Gastrocnemius medialis (tissue), 4 donors: ENCODE measurements at regions of chr12 and their contacts with region 1.

Region 1: GRCh38 chr12:104958009-104958945 is at the start of gene SLC41A2:
- DNase-seq: peak; percentile 45 to 51
- ATAC-seq: peak; percentile 79 to 81
- H3K4me3 ChIP-seq: peak within 1 kb of the TSS; percentile 67 to 93 (median 72)
- H3K27ac ChIP-seq: peak within 1 kb of the TSS; percentile 31 to 49 (median 48)
- H3K4me1 ChIP-seq: peaks cover 8 to 9% of the 10 kb centered on the region in 2 donors
- H3K27me3 ChIP-seq: peaks cover 5 to 24% (median 15%) of the 10 kb centered on the region in 3 donors
- CTCF ChIP-seq: peak in 3 of 5 experiments; percentile 23 to 45 (median 31)
- POLR2A ChIP-seq: peak; percentile 13 to 40
- total RNA-seq, gene SLC41A2: 0.35 to 4.5 (median 0.83) TPM

Region 2: GRCh38 chr12:104710940-104711689 is 247.2 kb before region 1 on chr12:
- in situ Hi-C with region 1: no loop called
- intact Hi-C with region 1: no loop called
- DNase-seq: no peak
- ATAC-seq: peak; percentile 30 to 58
- H3K4me3 ChIP-seq: no peak overlapping the region
- H3K27ac ChIP-seq: peak overlapping the region in 1 of 4 donors; percentile 10
- H3K4me1 ChIP-seq: no peaks in the 10 kb centered on the region
- H3K27me3 ChIP-seq: no peaks in the 10 kb centered on the region
- CTCF ChIP-seq: no peak
- POLR2A ChIP-seq: no peak

Region 3: DNA sequence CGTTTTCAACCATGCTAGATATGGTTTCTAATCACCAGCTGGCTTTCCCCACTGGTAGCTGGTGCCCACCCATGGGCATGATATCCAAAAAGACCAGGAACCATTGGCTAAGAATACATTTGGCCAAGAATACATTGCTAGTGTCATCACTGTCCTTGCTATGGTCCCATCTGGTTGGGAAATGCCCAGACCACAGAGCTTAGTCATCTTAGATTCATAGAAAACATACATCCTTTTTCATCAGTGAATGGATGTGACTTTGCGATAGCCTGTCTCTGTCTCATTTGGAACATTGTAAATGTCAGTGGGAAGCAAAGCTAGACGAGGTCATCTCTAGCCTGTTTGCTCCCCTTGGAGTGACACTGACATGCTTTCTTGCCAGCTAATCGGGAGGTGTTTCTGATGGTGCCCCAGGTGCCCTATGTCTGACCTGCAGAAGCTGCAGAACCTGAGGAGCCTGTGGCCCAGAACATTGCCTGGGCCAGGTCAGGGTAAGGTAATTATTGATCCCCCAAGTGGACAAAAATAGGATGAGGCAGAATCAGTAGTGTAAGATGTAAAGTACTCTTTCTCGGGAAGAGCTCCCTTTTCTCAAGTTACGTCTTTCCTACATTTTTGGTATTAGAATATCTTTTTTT is 195.0 kb before region 1 on chr12:
- in situ Hi-C with region 1: no loop called
- intact Hi-C with region 1: no loop called
- DNase-seq: no peak
- ATAC-seq: no peak
- H3K4me3 ChIP-seq: no peak overlapping the region
- H3K27ac ChIP-seq: no peak overlapping the region
- H3K4me1 ChIP-seq: no peaks in the 10 kb centered on the region
- H3K27me3 ChIP-seq: no peaks in the 10 kb centered on the region
- CTCF ChIP-seq: no peak
- POLR2A ChIP-seq: no peak

Region 4: DNA sequence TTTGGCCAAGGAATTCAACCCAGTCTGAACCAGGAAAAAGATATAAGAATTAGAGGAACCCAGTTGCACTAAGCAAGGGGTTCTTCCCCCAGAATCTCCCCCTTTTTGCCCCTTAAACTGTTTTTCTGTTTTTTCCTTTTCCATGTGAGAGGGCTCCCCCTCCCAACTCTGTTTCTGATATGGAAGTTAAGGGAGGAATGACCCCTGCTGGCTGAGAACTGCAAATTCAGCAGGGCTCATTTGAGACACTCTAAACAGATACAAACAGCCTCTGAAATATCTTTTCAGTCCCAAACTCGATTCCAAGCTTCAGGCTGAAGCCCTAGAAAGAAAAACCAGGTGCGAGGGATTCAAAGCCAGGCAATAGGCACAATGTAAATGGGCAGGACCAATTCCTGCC is 132.9 kb before region 1 on chr12:
- in situ Hi-C with region 1: no loop called
- intact Hi-C with region 1: no loop called
- DNase-seq: no peak
- ATAC-seq: no peak
- H3K4me3 ChIP-seq: no peak overlapping the region
- H3K27ac ChIP-seq: no peak overlapping the region
- H3K4me1 ChIP-seq: no peaks in the 10 kb centered on the region
- H3K27me3 ChIP-seq: no peaks in the 10 kb centered on the region
- CTCF ChIP-seq: no peak
- POLR2A ChIP-seq: no peak

Region 5: GRCh38 chr12:104986022-104986941 is 28.0 kb after region 1 on chr12 and contains the start of gene NOPCHAP1:
- in situ Hi-C with region 1: no loop called
- intact Hi-C with region 1: loop called (anchors 1 kb)
- DNase-seq: peak; percentile 80 to 87
- ATAC-seq: peak; percentile 99 to 100
- H3K4me3 ChIP-seq: peak within 1 kb of the TSS; percentile 74 to 97 (median 86)
- H3K27ac ChIP-seq: peak within 1 kb of the TSS; percentile 67 to 85 (median 81)
- H3K4me1 ChIP-seq: peaks cover 11 to 16% of the 10 kb centered on the region in 2 donors
- H3K27me3 ChIP-seq: no peaks in the 10 kb centered on the region
- CTCF ChIP-seq: no peak
- POLR2A ChIP-seq: peak in 1 of 2 donors; percentile 31
- total RNA-seq, gene NOPCHAP1: 2.5 to 5.0 (median 3.3) TPM